Aorta (tissue), 5 donors: ENCODE measurements at regions of chr9 and their contacts with region 1.

Region 1: DNA sequence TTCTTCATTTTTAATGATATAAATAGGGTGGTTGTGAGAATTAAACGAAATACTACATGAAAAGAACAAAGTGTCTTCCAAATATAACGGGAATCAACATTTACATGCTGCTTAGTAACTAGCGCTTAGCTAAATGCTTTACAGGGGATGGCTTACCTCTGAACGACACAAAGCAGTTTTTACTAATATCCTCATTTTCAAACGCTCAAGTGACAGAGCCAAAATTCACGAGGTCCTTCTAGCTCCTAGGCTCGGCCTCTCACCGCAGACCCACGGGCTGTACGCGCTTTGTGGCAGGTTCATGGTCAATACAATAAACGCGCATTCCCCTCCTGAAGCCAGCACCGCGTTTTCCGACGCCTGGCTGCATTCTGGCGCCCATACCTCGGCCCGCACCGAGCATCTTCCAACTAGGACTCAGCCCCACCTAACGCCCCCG is 442 bp downstream of the ZNF510 start:
- DNase-seq: no peak
- ATAC-seq: no peak
- H3K4me3 ChIP-seq: peak overlapping the region; percentile 36 to 69
- H3K27ac ChIP-seq: peak overlapping the region; percentile 14 to 36
- H3K4me1 ChIP-seq: peaks cover 2 to 5% of the 10 kb centered on the region in 2 donors
- H3K27me3 ChIP-seq: no peaks in the 10 kb centered on the region

Region 2: GRCh38 chr9:96686548-96687335 is 90.7 kb before region 1 on chr9:
- intact Hi-C with region 1: loop called in 1 of 2 experiments (anchors 10 kb)
- DNase-seq: peak; percentile 90 to 95
- ATAC-seq: peak; percentile 97
- H3K4me3 ChIP-seq: peak overlapping the region; percentile 3 to 33
- H3K27ac ChIP-seq: no peak overlapping the region
- H3K4me1 ChIP-seq: no peaks in the 10 kb centered on the region
- H3K27me3 ChIP-seq: no peaks in the 10 kb centered on the region

Region 3: GRCh38 chr9:97072343-97072742 is 294.9 kb after region 1 on chr9:
- intact Hi-C with region 1: no loop called
- DNase-seq: no peak
- ATAC-seq: no peak
- H3K4me3 ChIP-seq: no peak overlapping the region
- H3K27ac ChIP-seq: no peak overlapping the region
- H3K4me1 ChIP-seq: no peaks in the 10 kb centered on the region
- H3K27me3 ChIP-seq: peaks cover 0 to 1% of the 10 kb centered on the region in 2 donors